ENCODE measurements at regions of chr3 and their contacts with region 1.

Region 1: DNA sequence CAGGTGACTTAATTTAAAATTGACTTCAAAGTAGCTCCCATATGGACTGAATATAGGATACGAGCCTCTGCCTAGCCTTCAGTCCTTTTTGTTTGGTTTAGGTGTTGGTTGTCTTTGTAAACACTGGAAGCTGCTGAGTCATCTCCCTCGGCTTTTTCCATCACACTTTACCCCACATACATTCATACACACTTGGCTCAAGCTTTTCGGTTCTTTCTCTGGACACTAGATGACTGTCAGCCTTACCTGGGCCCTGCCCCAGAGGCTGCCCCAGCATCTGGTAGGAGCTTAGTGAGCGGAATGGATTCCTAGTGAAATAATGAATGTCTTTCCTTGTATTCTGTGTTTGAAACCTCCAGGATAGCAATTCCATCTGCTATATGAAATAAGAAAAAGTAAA is 201.4 kb upstream of the IL12A start:
- DNase-seq: peak; percentile 94
- H3K4me3 ChIP-seq: no peak overlapping the region
- H3K27ac ChIP-seq: peak overlapping the region; percentile 88
- H3K4me1 ChIP-seq: peaks cover 76% of the 10 kb centered on the region
- H3K27me3 ChIP-seq: no peaks in the 10 kb centered on the region
- CTCF ChIP-seq: no peak

Region 2: DNA sequence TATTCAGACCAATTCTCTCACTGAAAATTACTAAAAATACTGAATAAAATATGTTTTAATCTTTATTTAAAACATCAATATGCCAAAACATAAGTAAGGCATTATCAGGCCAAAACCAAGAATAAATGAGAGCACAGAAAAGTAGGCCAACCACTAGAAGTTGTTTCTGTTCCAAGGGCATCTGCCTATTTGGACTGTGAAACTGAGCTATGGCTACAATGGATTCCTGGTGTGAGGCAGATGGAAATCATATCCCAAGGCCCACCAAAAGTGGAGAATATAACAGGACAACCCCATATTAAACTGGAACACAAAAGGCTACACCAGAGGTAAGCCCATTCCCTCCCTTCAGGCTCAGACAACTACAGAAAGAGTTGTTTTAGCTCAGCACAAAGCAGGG is 101.4 kb before region 1 on chr3:
- CTCF ChIA-PET with region 1: no interaction called
- dilution Hi-C with region 1: no loop called
- in situ Hi-C with region 1: no loop called
- intact Hi-C with region 1: no loop called
- DNase-seq: no peak
- H3K4me3 ChIP-seq: no peak overlapping the region
- H3K27ac ChIP-seq: no peak overlapping the region
- H3K4me1 ChIP-seq: no peaks in the 10 kb centered on the region
- H3K27me3 ChIP-seq: no peaks in the 10 kb centered on the region
- CTCF ChIP-seq: no peak

Region 3: GRCh38 chr3:159798951-159799350 is 11.8 kb after region 1 on chr3:
- CTCF ChIA-PET with region 1: no interaction called
- dilution Hi-C with region 1: no loop called
- in situ Hi-C with region 1: no loop called
- intact Hi-C with region 1: loop called (anchors 1 kb)
- DNase-seq: peak; percentile 73
- H3K4me3 ChIP-seq: no peak overlapping the region
- H3K27ac ChIP-seq: peak overlapping the region; percentile 65
- H3K4me1 ChIP-seq: peaks cover 34% of the 10 kb centered on the region
- H3K27me3 ChIP-seq: no peaks in the 10 kb centered on the region
- CTCF ChIP-seq: no peak

Region 4: DNA sequence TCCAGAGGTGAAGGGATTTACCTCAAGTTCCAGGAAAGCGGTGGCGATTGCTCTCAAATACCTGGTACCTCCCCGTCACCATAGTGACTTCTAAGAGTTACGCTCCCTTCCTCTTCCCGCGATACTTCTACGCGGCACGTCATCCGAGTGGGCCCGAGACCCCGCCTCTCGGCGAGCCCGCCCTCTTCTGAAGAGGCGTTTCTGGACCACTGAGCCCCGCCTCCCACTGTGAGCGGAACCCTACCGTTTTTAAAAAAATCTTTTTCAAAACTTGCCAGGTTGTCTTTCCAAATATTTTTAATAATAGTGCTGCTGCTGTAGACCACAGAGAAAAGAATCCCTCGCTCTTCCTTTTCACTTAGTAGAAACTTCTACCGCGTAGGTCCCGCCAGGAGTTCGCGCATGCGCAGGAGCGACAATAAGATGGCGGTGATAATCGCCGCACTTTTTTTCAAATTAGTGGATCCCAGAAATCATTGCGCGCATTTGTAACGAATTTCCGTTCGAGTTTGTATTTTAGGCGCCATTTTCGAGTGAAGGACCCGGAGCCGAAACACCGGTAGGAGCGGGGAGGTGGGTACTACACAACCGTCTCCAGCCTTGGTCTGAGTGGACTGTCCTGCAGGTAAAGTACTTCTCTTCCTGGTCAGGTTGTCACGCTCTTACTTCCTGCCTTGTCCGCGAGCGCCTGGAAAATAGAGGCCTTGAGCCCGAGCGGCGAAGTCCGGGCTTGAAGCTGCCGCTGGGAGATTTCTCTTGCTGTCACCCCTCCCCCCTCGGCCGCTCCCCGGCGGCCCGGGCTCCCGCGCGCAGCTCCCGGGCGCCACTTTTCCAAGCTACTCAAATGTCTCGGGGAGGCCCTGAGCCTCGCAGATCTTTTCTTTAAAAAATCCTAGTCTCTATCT is 612.2 kb after region 1 on chr3 and contains the starts of genes IFT80 and SMC4:
- CTCF ChIA-PET with region 1: no interaction called
- dilution Hi-C with region 1: no loop called
- in situ Hi-C with region 1: no loop called
- intact Hi-C with region 1: loop called (anchors 10 kb)
- DNase-seq: peak; percentile 95
- H3K4me3 ChIP-seq: peak within 1 kb of the TSS; percentile 85 to 99 (median 97)
- H3K27ac ChIP-seq: peak within 1 kb of the TSS; percentile 87
- H3K4me1 ChIP-seq: peaks cover 12% of the 10 kb centered on the region
- H3K27me3 ChIP-seq: no peaks in the 10 kb centered on the region
- CTCF ChIP-seq: no peak
- total RNA-seq, gene IFT80: 21.2 to 35.3 TPM
- total RNA-seq, gene SMC4: 16.8 to 91.2 TPM